Activated CD4-positive, alpha-beta T cell treated with anti-CD3 and anti-CD28 coated beads for 36 hours (primary cell): ENCODE measurements at regions of chr16 and their contacts with region 1.

Region 1: GRCh38 chr16:30065143-30065850 is at the start of gene ALDOA:
- DNase-seq: peak; percentile 99
- ATAC-seq: peak; percentile 87
- H3K4me3 Mint-ChIP-seq: peak within 1 kb of the TSS; percentile 88
- H3K27ac Mint-ChIP-seq: peak within 1 kb of the TSS; percentile 99
- H3K4me1 Mint-ChIP-seq: peaks cover 31% of the 10 kb centered on the region
- H3K27me3 Mint-ChIP-seq: no peaks in the 10 kb centered on the region
- total RNA-seq, gene ALDOA: 2,482 to 3,644 TPM

Region 2: GRCh38 chr16:28924732-28925385 is 1140.4 kb before region 1 on chr16 and contains the start of gene RABEP2:
- CTCF ChIA-PET with region 1: no interaction called
- POLR2A ChIA-PET with region 1: no interaction called
- intact Hi-C with region 1: loop called in 1 of 2 experiments (anchors 10 kb)
- DNase-seq: peak; percentile 99
- ATAC-seq: peak; percentile 93
- H3K4me3 Mint-ChIP-seq: peak within 1 kb of the TSS; percentile 87
- H3K27ac Mint-ChIP-seq: peak within 1 kb of the TSS; percentile 96
- H3K4me1 Mint-ChIP-seq: peaks cover 14% of the 10 kb centered on the region
- H3K27me3 Mint-ChIP-seq: no peaks in the 10 kb centered on the region
- total RNA-seq, gene RABEP2: 8.1 to 12.9 TPM

Region 3: GRCh38 chr16:29825145-29826044 is 239.9 kb before region 1 on chr16:
- CTCF ChIA-PET with region 1: no interaction called
- POLR2A ChIA-PET with region 1: no interaction called
- intact Hi-C with region 1: loop called in 1 of 2 experiments (anchors 1 kb)
- DNase-seq: peak; percentile 72
- ATAC-seq: peak; percentile 57
- H3K4me3 Mint-ChIP-seq: peak overlapping the region; percentile 53
- H3K27ac Mint-ChIP-seq: peak overlapping the region; percentile 91
- H3K4me1 Mint-ChIP-seq: peaks cover 78% of the 10 kb centered on the region
- H3K27me3 Mint-ChIP-seq: no peaks in the 10 kb centered on the region

Region 4: GRCh38 chr16:29854520-29855100 is 210.7 kb before region 1 on chr16:
- CTCF ChIA-PET with region 1: no interaction called
- POLR2A ChIA-PET with region 1: no interaction called
- intact Hi-C with region 1: no loop called
- DNase-seq: peak; percentile 27
- ATAC-seq: peak; percentile 64
- H3K4me3 Mint-ChIP-seq: no peak overlapping the region
- H3K27ac Mint-ChIP-seq: no peak overlapping the region
- H3K4me1 Mint-ChIP-seq: peaks cover 2% of the 10 kb centered on the region
- H3K27me3 Mint-ChIP-seq: no peaks in the 10 kb centered on the region

Region 5: DNA sequence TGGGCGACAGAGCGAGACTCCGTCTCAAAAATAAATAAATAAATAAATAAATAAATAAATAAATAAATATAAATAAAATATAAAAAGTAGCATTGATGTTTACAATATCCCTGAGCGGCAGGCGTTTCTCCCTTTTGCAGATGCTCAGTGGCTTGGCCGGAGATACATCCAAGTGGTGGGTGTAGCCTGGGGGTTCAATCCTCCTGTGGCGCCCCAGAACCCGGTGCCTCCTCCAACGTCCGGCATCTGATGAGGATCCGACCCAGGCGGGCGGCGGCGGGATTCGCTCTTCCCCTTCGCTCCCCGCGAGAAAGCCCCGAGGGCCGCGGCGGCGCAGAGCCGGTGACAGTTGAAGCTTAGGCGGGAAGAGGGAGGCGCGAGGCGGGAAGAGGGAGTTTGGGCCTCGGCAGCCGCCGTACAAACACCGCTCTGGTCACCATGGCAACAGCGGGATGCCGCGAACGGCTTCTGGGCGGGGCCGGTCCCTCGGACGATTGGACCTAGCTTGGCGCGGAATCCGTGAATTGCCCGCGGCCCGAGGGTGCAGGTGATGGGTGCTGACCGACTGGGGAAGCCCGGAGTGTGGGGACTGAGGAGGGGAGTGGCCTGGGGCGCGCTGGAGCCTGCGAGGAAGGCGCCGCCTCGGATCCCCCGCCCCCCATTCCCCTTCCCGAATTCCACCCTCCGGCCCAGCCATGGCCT is 12.5 kb before region 1 on chr16:
- CTCF ChIA-PET with region 1: interaction called, 8 read pairs
- POLR2A ChIA-PET with region 1: interaction called, 7 read pairs
- intact Hi-C with region 1: loop called (anchors 1 kb)
- DNase-seq: peak; percentile 95
- ATAC-seq: peak; percentile 69
- H3K4me3 Mint-ChIP-seq: peak overlapping the region; percentile 78
- H3K27ac Mint-ChIP-seq: peak overlapping the region; percentile 72
- H3K4me1 Mint-ChIP-seq: peaks cover 25% of the 10 kb centered on the region
- H3K27me3 Mint-ChIP-seq: peaks cover 2% of the 10 kb centered on the region

Region 6: DNA sequence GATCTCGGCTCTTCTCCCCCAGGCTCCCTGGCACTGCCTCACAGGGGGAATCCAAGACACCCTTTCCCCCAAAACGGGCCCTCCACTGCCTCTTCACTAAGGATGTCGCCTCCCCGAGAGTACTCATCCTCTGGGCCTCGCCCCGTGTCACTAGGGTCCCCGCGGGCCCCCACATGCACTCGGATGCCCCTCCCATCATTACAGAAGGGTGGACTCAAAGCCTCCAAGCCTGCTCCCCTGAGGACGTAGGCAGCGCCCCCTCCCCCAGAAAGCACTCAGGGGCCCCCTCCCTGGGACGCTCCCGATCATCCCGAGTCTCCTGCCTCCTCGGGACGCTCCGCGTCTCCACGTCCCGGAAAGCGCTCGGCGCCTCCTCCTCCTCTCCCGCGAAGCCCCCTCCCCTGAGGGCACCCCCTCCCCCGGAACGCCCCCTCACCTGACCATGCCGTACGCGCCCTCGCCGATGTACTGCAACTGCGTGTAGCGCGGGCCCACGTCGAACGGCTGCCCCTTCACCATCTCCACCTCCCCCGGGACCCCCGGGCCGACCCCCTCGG is 57.4 kb after region 1 on chr16:
- CTCF ChIA-PET with region 1: no interaction called
- POLR2A ChIA-PET with region 1: interaction called, 4 read pairs
- intact Hi-C with region 1: loop called in 1 of 2 experiments (anchors 1 kb)
- DNase-seq: peak; percentile 35
- ATAC-seq: peak; percentile 37
- H3K4me3 Mint-ChIP-seq: peak overlapping the region; percentile 87
- H3K27ac Mint-ChIP-seq: peak overlapping the region; percentile 89
- H3K4me1 Mint-ChIP-seq: peaks cover 17% of the 10 kb centered on the region
- H3K27me3 Mint-ChIP-seq: no peaks in the 10 kb centered on the region

Region 7: DNA sequence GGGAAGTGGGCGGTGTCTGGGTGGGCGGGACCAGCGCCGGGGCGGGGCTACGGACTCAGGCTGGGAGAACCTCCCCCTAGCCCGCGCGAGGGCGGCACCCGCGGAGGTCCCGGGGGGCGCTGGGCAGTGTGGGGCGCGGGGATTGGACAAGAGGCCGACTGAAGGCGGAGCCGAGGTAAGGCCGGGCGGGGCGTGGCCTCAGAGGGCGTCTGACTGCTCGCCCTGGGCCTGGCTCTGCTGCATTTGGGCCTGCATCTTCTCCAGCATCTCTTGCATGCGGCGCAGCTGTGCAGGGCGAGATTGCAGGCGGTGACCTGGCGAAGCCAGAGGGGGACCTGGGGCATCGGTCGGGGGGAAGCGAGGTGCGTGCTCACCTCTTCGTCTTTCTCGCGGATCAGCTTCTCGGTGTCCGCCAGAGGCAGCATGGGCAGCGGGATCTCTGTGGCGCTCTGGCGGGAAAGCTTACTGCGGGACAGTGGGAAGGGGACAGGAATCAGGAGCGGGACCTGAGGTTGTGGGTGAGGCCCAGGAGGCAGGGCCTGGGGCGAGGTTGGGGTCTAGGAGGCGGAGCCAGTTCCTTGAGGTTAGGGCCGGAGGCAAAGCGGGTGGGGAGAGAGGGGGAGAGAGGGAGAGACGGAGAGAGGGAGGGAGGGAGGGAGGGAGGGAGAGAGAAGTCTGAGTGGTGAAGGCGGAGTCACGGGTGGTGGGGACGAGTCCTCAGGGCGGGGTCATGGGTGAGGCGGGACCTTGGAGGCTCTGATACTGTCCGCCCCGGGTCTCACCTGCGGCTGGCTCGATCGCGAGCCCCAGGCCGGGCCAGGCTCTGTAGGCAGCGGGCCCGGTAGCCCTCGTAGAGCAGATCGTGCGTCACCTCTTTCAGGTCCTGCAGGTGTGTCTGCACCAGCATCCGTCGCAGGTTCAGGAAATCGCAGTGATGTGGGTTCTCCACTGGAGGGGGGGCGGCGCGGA is 313.2 kb after region 1 on chr16:
- CTCF ChIA-PET with region 1: interaction called, 3 read pairs
- POLR2A ChIA-PET with region 1: no interaction called
- intact Hi-C with region 1: loop called in 1 of 2 experiments (anchors 1 kb)
- DNase-seq: peak; percentile 100
- ATAC-seq: peak; percentile 87
- H3K4me3 Mint-ChIP-seq: peak overlapping the region; percentile 99
- H3K27ac Mint-ChIP-seq: peak overlapping the region; percentile 99
- H3K4me1 Mint-ChIP-seq: peaks cover 44% of the 10 kb centered on the region
- H3K27me3 Mint-ChIP-seq: no peaks in the 10 kb centered on the region

Region 8: GRCh38 chr16:30609926-30610839 is 544.9 kb after region 1 on chr16 and contains the start of gene ZNF689:
- CTCF ChIA-PET with region 1: no interaction called
- POLR2A ChIA-PET with region 1: no interaction called
- intact Hi-C with region 1: loop called in 1 of 2 experiments (anchors 5 kb)
- DNase-seq: peak; percentile 96
- ATAC-seq: peak; percentile 88
- H3K4me3 Mint-ChIP-seq: peak within 1 kb of the TSS; percentile 80
- H3K27ac Mint-ChIP-seq: peak within 1 kb of the TSS; percentile 96
- H3K4me1 Mint-ChIP-seq: peaks cover 19% of the 10 kb centered on the region
- H3K27me3 Mint-ChIP-seq: no peaks in the 10 kb centered on the region
- total RNA-seq, gene ZNF689: 9.0 to 10.7 TPM